Activated CD4-positive, alpha-beta T cell treated with anti-CD3 and anti-CD28 coated beads, Interleukin-2, amount 10 ng/mL, durations not matched to agents 24 days and 14 days (primary cell): ENCODE measurements at regions of chr3 and their contacts with region 1.

Region 1: GRCh38 chr3:142595951-142596725 is at the start of gene PLS1:
- DNase-seq: peak; percentile 98
- H3K4me3 Mint-ChIP-seq: peak within 1 kb of the TSS; percentile 99
- H3K27ac Mint-ChIP-seq: peak within 1 kb of the TSS; percentile 87
- H3K4me1 Mint-ChIP-seq: peaks cover 15% of the 10 kb centered on the region
- H3K27me3 Mint-ChIP-seq: no peaks in the 10 kb centered on the region
- total RNA-seq, gene PLS1: 4.6 TPM in 2 replicates

Region 2: GRCh38 chr3:142332390-142332789 is 263.7 kb before region 1 on chr3:
- intact Hi-C with region 1: no loop called
- DNase-seq: no peak
- H3K4me3 Mint-ChIP-seq: no peak overlapping the region
- H3K27ac Mint-ChIP-seq: no peak overlapping the region
- H3K4me1 Mint-ChIP-seq: no peaks in the 10 kb centered on the region
- H3K27me3 Mint-ChIP-seq: no peaks in the 10 kb centered on the region

Region 3: GRCh38 chr3:142670120-142670519 is 74.0 kb after region 1 on chr3:
- intact Hi-C with region 1: no loop called
- DNase-seq: no peak
- H3K4me3 Mint-ChIP-seq: no peak overlapping the region
- H3K27ac Mint-ChIP-seq: no peak overlapping the region
- H3K4me1 Mint-ChIP-seq: no peaks in the 10 kb centered on the region
- H3K27me3 Mint-ChIP-seq: no peaks in the 10 kb centered on the region

Region 4: DNA sequence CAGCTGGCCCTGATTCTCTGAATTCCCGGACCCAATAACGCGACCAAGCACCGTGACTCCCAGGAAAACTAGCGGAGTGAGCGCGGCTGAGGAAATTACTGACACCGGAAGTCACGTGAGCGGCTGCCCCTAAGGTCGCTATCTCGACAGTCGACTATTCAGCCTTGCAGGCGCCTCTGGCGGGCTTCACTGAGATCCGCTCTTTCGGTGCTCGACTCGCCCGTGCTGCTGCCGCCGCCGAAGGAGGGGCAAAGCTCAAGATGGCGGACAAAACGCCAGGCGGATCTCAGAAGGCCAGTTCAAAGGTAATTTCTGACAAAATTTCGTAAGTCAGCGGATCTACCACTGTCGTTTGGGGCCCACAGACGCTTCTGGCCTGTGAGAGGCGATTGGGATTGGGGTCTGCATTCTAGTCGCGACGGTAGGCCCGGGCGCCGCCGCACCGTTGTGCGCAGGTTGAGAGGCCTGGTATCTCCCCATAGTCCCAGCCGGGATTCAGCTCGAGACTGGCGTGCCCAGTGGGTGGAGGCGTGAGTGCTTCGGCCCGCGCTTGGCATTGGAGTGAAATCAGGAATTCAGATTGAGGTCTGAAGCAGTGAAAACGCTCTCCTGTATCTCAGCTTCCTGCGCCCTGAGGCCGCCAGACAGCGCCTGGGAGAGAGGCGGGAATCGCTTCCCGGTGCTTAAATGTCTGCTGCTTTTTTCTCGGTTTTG is 405.4 kb after region 1 on chr3 and contains the start of gene U2SURP:
- intact Hi-C with region 1: loop called (anchors 2 kb)
- DNase-seq: peak; percentile 97
- H3K4me3 Mint-ChIP-seq: peak within 1 kb of the TSS; percentile 96
- H3K27ac Mint-ChIP-seq: peak within 1 kb of the TSS; percentile 97
- H3K4me1 Mint-ChIP-seq: peaks cover 24% of the 10 kb centered on the region
- H3K27me3 Mint-ChIP-seq: peaks cover 8% of the 10 kb centered on the region
- total RNA-seq, gene U2SURP: 189 and 212 TPM in 2 replicates

Region 5: GRCh38 chr3:143753006-143753405 is 1156.9 kb after region 1 on chr3:
- intact Hi-C with region 1: no loop called
- DNase-seq: no peak
- H3K4me3 Mint-ChIP-seq: peak overlapping the region; percentile 7
- H3K27ac Mint-ChIP-seq: no peak overlapping the region
- H3K4me1 Mint-ChIP-seq: peaks cover 17% of the 10 kb centered on the region
- H3K27me3 Mint-ChIP-seq: no peaks in the 10 kb centered on the region